ENCODE measurements at regions of chr2 and their contacts with region 1.

Region 1: GRCh38 chr2:168796583-168797285 is 5.7 kb upstream of the NOSTRIN start:
- DNase-seq: peak; percentile 15
- ATAC-seq: peak; percentile 17; the same call in 1 of the 2 replicates
- H3K4me3 ChIP-seq: no peak overlapping the region
- H3K27ac ChIP-seq: no peak overlapping the region
- H3K4me1 ChIP-seq: 0 out of 2 replicates have a peak, but pooled peaks cover 2% of the 10 kb centered on the region
- H3K27me3 ChIP-seq: no peaks in the 10 kb centered on the region; the same call in 1 of the 2 replicates
- CTCF ChIP-seq: no peak
- POLR2A ChIP-seq: no peak
- RAD21 ChIP-seq: no peak

Region 2: GRCh38 chr2:167832868-167833287 is 963.9 kb before region 1 on chr2:
- CTCF ChIA-PET with region 1: no interaction called
- POLR2A ChIA-PET with region 1: no interaction called
- dilution Hi-C with region 1: no loop called
- in situ Hi-C with region 1: no loop called
- intact Hi-C with region 1: no loop called
- DNase-seq: no peak
- ATAC-seq: 0 out of 2 replicates have a peak, but pooled peaks have one; percentile 21
- H3K4me3 ChIP-seq: no peak overlapping the region
- H3K27ac ChIP-seq: no peak overlapping the region
- H3K4me1 ChIP-seq: no peaks in the 10 kb centered on the region
- H3K27me3 ChIP-seq: no peaks in the 10 kb centered on the region
- CTCF ChIP-seq: no peak
- POLR2A ChIP-seq: no peak
- RAD21 ChIP-seq: no peak

Region 3: DNA sequence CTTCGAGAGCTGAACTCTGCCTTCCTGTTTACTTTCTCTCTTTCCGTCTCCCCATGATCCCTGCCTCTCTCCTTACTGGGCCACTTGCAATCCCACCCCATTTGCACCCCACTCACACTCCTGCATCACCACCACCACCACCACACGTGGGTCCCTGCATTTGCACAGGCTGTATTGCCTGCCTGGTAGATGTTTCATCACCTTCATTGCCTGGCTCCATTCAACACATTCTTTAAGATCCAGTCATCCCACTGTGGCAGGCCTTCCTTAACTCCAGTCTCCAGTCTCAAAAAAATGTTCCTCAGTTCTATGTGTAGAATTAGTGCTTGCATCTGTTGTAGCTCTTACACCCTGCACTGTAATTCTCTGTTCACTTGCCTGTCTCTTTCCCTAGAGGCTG is 19.6 kb after region 1 on chr2:
- CTCF ChIA-PET with region 1: interaction called, 10 read pairs
- POLR2A ChIA-PET with region 1: no interaction called
- dilution Hi-C with region 1: no loop called
- in situ Hi-C with region 1: no loop called
- intact Hi-C with region 1: no loop called
- DNase-seq: peak; percentile 87
- ATAC-seq: peak; percentile 91
- H3K4me3 ChIP-seq: no peak overlapping the region
- H3K27ac ChIP-seq: no peak overlapping the region
- H3K4me1 ChIP-seq: peaks cover 2% of the 10 kb centered on the region; the same call in 1 of the 2 replicates
- H3K27me3 ChIP-seq: no peaks in the 10 kb centered on the region
- CTCF ChIP-seq: no peak
- POLR2A ChIP-seq: no peak
- RAD21 ChIP-seq: no peak